SK-N-SH (cell line): ENCODE measurements at regions of chr11 and their contacts with region 1.

Region 1: DNA sequence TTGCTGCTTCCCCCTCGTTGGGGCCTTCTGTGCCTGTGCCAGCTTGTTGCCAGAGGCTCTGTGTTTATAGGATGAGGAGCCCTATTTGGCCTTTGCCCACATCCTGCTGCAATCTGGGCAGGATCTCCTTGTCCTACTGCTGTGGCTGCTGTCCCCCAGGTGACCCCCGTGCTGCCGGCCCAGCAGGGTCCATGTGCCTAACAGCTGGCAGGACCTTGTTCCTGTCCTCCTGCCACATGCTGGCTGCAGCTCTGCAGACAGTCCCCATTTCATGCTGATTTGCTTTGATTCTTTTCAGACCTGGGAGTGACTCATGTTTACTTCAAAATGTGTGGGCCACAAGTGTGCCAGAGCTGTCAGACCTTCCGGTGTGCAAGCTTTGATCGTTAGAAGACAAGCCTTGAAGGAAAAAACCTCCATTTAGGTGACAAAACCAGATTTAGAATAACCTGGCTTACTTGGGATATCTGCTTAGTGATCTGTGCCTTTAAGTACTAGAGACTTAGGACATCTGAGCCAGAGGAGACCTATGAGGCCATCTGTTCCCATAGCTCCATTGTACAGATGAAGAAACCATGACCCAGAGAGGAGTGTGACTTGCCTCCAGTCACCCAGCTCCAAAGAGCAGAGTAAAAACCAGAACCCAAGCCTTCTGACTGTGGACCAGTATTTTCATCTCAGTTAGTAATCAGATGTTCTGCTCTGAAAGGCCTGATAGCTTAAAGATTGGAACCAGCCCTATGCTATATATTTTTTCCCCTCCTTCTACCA is 11.1 kb downstream of the NAV2 start:
- DNase-seq: peak; percentile 85
- H3K4me3 ChIP-seq: no peak overlapping the region
- H3K27ac ChIP-seq: peak overlapping the region; percentile 54 to 99
- H3K4me1 ChIP-seq: peaks cover 15 to 88% of the 10 kb centered on the region in 2 experiments; a peak in 3 of 4 replicates
- H3K27me3 ChIP-seq: no peaks in the 10 kb centered on the region
- CTCF ChIP-seq: no peak
- EP300 ChIP-seq: peak; percentile 46 to 96; a peak in 2 of 4 replicates
- RAD21 ChIP-seq: peak; percentile 7; the same call in 1 of the 2 replicates

Region 2: GRCh38 chr11:19561011-19561410 is 162.7 kb before region 1 on chr11:
- CTCF ChIA-PET with region 1: interaction called, 35 read pairs
- POLR2A ChIA-PET with region 1: interaction called, 9 read pairs
- DNase-seq: no peak
- H3K4me3 ChIP-seq: no peak overlapping the region
- H3K27ac ChIP-seq: peak overlapping the region in 1 of 2 experiments; percentile 96; a peak in 2 of 4 replicates
- H3K4me1 ChIP-seq: peaks cover 0 to 64% of the 10 kb centered on the region in 2 experiments; a peak in 2 of 4 replicates
- H3K27me3 ChIP-seq: no peaks in the 10 kb centered on the region
- CTCF ChIP-seq: no peak
- EP300 ChIP-seq: no peak
- RAD21 ChIP-seq: no peak

Region 3: GRCh38 chr11:19566583-19567379 is 157.0 kb before region 1 on chr11:
- CTCF ChIA-PET with region 1: interaction called, 35 read pairs
- POLR2A ChIA-PET with region 1: interaction called, 3 read pairs
- DNase-seq: no peak
- H3K4me3 ChIP-seq: no peak overlapping the region
- H3K27ac ChIP-seq: no peak overlapping the region
- H3K4me1 ChIP-seq: peaks cover 0 to 33% of the 10 kb centered on the region in 2 experiments; a peak in 2 of 4 replicates
- H3K27me3 ChIP-seq: no peaks in the 10 kb centered on the region
- CTCF ChIP-seq: no peak
- EP300 ChIP-seq: no peak
- RAD21 ChIP-seq: no peak

Region 4: DNA sequence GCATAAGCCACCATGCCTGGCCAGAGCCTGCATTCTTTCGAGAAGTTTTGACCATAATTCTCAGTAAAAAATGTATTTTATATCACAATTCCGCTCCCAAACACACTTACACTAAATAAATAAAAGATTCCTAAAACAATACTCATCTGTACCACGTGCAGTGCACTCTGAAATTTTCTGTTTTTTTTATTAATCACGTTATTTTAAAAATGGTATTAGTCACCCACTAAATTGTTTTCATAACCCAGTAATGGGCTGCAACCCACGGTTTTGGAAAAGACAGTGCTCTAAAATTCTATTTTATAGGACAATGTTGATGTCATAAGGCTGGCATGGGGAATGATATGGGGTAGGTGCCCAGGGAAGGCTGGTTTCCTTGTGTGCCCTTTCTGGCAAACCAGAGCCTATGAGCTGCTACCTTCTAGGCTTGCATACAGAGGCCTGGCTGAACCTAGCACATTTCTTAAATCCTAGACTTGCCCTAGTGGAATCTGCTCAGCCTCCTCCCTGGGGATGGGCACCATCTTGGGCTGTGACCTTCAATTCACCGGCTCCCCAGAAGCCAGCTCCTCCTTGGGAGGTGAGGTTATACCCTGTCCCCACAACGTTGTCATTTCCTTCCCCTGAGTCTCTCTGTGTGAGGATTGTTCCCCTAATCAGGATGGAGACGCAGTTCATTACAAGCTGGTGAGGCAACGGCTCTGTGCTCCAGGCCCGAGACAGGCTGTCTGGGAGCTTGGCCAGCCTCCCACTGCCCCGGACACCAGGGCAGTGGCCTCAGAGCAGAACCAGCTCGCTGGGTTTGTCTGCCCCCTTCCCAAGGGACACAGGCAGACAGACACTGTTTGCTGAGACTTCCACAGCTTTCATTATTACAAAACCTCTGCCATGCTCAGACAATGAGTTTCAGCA is 127.7 kb before region 1 on chr11:
- CTCF ChIA-PET with region 1: interaction called, 4 read pairs
- POLR2A ChIA-PET with region 1: interaction called, 10 read pairs
- DNase-seq: peak; percentile 74
- H3K4me3 ChIP-seq: peak overlapping the region; percentile 37 to 42; a peak in 3 of 4 replicates
- H3K27ac ChIP-seq: peak overlapping the region; percentile 96 to 100
- H3K4me1 ChIP-seq: peaks cover 10 to 57% of the 10 kb centered on the region in 2 experiments
- H3K27me3 ChIP-seq: no peaks in the 10 kb centered on the region
- CTCF ChIP-seq: no peak
- EP300 ChIP-seq: peak; percentile 71 to 88
- RAD21 ChIP-seq: peak; percentile 13; the same call in 1 of the 2 replicates

Region 5: DNA sequence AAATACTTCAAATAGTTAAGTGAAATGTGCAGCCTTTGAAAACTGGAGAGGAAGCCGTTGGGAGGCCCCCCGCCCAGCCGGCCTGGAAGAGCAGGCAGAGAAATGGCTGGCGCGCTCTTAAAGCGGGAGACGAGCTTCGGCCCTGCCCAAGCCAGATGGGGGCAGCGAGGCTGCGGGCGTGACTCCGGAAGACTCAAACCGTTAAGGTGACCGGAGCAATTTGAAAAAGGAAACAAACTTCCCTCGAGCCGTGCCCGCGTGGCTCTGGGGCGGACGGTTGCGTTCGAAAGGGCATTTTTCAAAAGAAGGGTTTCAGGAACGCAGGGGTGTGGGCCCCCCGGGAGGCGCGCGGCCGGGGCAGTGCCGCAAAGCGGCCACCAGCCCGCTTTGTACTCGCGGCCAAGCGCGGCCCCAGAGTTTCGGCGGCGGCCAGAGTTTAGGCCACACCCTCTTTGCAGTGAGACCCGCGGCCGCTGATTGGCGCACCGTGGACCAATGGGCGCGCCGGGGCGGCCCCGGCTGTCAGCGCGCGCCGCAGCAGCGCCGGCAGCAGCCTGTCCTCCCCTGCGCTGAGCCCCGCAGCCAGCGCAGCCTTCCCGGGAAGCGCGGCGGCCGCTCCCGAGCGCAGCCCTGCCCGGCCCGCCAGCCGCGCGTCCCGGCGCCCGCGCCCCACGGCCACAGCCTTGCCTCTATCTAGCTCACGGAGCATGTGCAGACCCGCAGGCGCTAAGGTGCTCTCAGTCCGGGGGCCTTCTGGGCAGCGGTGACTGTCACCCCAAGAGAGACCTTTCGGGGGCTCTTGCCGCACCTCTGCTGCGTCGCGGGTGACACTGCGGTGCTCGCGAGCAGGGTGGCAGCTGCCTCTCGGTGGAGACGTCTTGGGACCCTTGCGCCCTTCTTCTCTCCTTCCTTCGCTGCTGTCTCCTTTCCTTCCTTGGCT is 11.2 kb before region 1 on chr11 and contains the start of gene NAV2:
- CTCF ChIA-PET with region 1: interaction called, 22 read pairs
- POLR2A ChIA-PET with region 1: interaction called, 22 read pairs
- DNase-seq: peak; percentile 93
- H3K4me3 ChIP-seq: peak within 1 kb of the TSS; percentile 80
- H3K27ac ChIP-seq: peak within 1 kb of the TSS; percentile 94 to 99
- H3K4me1 ChIP-seq: peaks cover 8 to 49% of the 10 kb centered on the region in 2 experiments
- H3K27me3 ChIP-seq: no peaks in the 10 kb centered on the region
- CTCF ChIP-seq: no peak
- EP300 ChIP-seq: 0 out of 4 replicates have a peak, but pooled peaks of 1 of the 2 experiments have one; percentile 54
- RAD21 ChIP-seq: no peak; the same call in 1 of the 2 replicates
- polyA plus RNA-seq, gene NAV2: 19.0 and 26.2 TPM in 2 replicates

Region 6: DNA sequence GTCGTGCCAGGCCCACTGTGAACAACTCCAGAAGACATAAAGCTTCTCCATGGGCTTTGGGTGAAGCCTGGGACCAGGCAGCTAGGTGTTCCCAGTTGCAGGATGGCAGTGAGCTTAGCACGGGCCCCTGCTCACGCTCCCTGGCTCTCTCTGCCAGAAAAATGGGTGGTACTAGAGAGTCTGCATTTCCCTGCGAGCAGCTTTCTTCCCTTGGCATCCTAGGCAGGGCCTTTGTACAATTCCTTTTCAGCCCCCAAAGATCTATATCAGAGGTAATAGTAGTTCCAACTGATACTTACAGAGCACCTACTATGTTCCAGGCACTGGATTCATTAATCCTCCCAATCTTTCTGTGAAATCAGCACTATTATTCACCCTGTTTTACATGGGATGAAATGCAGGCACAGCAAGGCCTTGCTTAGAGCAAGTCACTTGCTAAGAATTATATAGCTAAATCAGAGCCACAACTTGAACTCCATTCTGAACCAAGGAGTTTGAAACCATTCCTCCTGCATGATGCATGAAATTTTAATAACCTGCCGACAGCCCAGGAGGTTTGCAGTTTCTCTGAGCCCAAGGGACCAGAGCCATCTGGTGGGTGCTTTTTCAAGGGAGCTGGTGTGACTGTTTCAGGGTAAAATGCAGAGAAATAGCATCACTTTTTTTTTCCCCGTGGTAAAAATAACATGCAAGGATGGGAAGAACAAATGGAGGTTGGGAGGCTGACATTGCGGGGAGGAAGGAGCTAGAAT is 11.6 kb after region 1 on chr11:
- CTCF ChIA-PET with region 1: interaction called, 13 read pairs
- POLR2A ChIA-PET with region 1: interaction called, 26 read pairs
- DNase-seq: no peak
- H3K4me3 ChIP-seq: no peak overlapping the region
- H3K27ac ChIP-seq: peak overlapping the region; percentile 38 to 85
- H3K4me1 ChIP-seq: peaks cover 30 to 87% of the 10 kb centered on the region in 2 experiments
- H3K27me3 ChIP-seq: no peaks in the 10 kb centered on the region
- CTCF ChIP-seq: peak; percentile 50
- EP300 ChIP-seq: no peak; a peak in 1 of 4 replicates
- RAD21 ChIP-seq: peak; percentile 64